Activated naive CD4-positive, alpha-beta T cell treated with anti-CD3 and anti-CD28 coated beads for 36 hours (primary cell): ENCODE measurements at regions of chr22 and their contacts with region 1.

Region 1: GRCh38 chr22:46563381-46564083 is 26.1 kb upstream of the CELSR1 start:
- DNase-seq: peak; percentile 88
- H3K4me3 Mint-ChIP-seq: peak overlapping the region; percentile 13
- H3K27ac Mint-ChIP-seq: no peak overlapping the region
- H3K4me1 Mint-ChIP-seq: peaks cover 7% of the 10 kb centered on the region
- H3K27me3 Mint-ChIP-seq: no peaks in the 10 kb centered on the region

Region 2: DNA sequence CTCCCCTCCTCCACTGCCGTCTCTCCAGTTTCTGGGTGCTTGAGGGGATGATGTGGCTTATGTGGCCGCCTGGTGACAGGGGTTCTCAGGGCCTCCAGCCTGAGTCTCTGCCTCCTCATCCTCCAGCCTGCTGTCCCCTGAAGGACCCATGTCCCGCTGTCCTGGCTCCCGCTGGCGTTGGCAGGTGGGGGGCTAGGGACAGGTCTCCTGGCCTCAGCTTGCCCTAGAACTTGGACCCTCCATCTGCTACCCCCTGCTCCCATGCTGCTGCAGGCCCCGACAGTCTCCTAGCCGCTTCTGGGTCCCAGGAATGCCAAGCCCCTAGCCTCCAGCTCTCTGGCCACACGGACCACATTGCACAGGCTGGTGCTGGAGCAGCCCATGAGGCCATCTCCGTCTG is 12.2 kb before region 1 on chr22:
- CTCF ChIA-PET with region 1: interaction called, 11 read pairs
- intact Hi-C with region 1: no loop called
- DNase-seq: no peak
- H3K4me3 Mint-ChIP-seq: no peak overlapping the region
- H3K27ac Mint-ChIP-seq: no peak overlapping the region
- H3K4me1 Mint-ChIP-seq: no peaks in the 10 kb centered on the region
- H3K27me3 Mint-ChIP-seq: no peaks in the 10 kb centered on the region

Region 3: DNA sequence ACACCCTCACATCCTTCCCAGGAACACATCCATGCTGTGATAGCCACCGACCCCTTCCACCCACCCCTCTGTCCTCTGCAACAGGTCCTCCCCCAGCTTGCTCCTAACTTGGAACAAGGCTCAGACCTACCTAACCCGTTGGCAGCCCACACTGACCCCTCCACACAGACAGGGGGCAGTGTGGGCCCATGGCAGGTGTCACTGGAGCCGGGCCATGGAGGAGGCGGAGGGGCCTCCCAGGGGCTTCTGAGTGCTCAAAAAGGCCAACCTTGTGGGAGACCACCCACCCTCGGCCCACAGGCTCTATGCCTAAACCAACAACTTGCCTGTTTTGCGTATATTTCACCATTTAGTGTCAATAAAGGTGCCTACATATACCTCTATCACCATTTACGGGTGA is 117.5 kb after region 1 on chr22:
- CTCF ChIA-PET with region 1: interaction called, 15 read pairs
- intact Hi-C with region 1: loop called (anchors 1 kb)
- DNase-seq: peak; percentile 27
- H3K4me3 Mint-ChIP-seq: no peak overlapping the region
- H3K27ac Mint-ChIP-seq: peak overlapping the region; percentile 59
- H3K4me1 Mint-ChIP-seq: peaks cover 42% of the 10 kb centered on the region
- H3K27me3 Mint-ChIP-seq: no peaks in the 10 kb centered on the region

Region 4: DNA sequence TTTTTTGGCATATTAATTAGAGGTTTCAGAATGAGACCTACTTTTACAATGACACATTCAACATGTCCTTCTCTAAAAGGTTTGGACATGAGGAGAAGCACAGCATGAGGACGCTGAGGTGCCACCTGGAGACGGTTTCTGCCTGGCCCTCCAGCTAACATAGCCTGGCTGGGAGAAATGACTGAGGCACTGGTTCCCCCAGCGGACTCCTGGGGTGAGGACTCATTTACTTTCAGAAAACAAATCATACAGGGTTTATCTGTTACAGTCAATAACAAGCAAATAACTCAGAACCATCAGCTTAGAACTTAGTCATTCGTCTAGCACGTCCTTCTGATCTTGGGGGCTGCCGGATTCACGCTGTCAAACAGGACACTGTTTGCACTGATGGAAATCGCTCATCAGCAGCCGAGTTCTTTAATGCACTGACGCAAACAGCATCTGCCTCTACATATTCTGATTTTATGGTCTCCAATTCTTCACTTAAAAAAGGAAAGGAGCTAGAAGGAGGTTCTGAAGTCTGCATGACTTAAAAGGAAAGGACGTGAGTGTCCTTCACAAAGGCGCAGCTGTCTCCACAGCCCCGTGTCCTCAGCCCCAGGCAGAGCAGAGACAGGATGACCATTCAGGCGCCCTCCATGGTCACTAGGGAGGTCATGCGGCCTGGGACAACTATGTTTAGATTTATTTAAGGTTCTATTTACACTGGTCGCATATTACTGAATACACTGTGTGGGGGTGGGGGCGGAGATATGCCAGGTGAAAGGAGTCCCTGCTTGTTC is 130.3 kb after region 1 on chr22:
- CTCF ChIA-PET with region 1: interaction called, 11 read pairs
- intact Hi-C with region 1: no loop called
- DNase-seq: no peak
- H3K4me3 Mint-ChIP-seq: no peak overlapping the region
- H3K27ac Mint-ChIP-seq: no peak overlapping the region
- H3K4me1 Mint-ChIP-seq: no peaks in the 10 kb centered on the region
- H3K27me3 Mint-ChIP-seq: no peaks in the 10 kb centered on the region

Region 5: GRCh38 chr22:46737976-46738646 is 174.6 kb after region 1 on chr22 and contains the start of gene CERK:
- CTCF ChIA-PET with region 1: interaction called, 7 read pairs
- intact Hi-C with region 1: loop called (anchors 2 kb)
- DNase-seq: peak; percentile 72
- H3K4me3 Mint-ChIP-seq: peak within 1 kb of the TSS; percentile 100
- H3K27ac Mint-ChIP-seq: peak within 1 kb of the TSS; percentile 99
- H3K4me1 Mint-ChIP-seq: peaks cover 40% of the 10 kb centered on the region
- H3K27me3 Mint-ChIP-seq: no peaks in the 10 kb centered on the region
- total RNA-seq, gene CERK: 32.6 to 34.9 TPM

Region 6: DNA sequence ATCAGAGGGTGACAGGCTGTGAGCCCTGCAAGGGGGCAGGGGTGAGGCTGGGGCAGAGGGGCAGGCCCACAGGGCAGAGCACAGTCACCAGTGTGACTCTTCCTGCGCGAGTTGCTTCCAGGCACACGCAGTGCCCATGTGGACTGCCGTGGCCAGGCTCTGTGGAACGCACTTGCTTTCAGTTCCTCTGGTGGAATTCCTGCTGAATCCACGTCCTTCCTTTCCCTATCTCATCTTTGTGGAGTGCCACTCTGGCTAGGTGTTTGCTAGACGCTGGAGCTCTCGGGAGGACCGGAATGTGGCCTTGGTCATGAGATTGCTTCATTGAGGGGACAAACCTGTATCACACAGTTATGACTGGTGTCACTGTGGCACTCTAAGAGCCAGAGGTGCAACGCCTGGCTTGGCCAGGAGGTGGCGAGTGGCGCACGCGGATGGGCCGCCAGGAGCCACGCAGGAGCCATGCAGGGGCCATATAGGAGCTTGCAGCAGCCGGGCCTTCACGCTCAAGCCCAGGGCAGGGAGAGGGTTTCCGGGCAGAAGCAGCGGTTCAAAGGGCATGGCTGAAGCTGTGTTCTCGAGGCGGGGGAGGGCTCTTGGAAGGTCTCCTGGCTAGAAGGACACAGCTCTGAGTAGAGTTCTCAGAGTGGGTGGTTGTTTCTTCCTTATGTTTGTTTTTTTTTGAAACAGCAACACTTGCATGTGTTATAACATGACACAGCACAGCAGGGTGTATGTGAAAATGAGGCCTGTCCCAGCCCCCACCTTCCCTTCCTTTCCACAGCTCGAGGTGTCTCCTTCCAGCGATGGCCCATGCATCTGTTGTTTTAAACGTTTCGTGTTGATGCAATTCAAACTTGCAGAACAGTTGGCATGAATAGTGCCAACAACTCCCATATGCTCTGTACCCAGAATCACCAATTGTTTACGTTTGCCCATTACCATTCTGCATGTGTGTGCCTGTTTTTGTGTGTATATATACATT is 235.1 kb after region 1 on chr22:
- CTCF ChIA-PET with region 1: interaction called, 12 read pairs
- intact Hi-C with region 1: loop called (anchors 2 kb)
- DNase-seq: peak; percentile 80
- H3K4me3 Mint-ChIP-seq: no peak overlapping the region
- H3K27ac Mint-ChIP-seq: no peak overlapping the region
- H3K4me1 Mint-ChIP-seq: peaks cover 18% of the 10 kb centered on the region
- H3K27me3 Mint-ChIP-seq: no peaks in the 10 kb centered on the region